Upper lobe of right lung (tissue), 1 donor: ENCODE measurements at regions of chr11 and their contacts with region 1.

Region 1: DNA sequence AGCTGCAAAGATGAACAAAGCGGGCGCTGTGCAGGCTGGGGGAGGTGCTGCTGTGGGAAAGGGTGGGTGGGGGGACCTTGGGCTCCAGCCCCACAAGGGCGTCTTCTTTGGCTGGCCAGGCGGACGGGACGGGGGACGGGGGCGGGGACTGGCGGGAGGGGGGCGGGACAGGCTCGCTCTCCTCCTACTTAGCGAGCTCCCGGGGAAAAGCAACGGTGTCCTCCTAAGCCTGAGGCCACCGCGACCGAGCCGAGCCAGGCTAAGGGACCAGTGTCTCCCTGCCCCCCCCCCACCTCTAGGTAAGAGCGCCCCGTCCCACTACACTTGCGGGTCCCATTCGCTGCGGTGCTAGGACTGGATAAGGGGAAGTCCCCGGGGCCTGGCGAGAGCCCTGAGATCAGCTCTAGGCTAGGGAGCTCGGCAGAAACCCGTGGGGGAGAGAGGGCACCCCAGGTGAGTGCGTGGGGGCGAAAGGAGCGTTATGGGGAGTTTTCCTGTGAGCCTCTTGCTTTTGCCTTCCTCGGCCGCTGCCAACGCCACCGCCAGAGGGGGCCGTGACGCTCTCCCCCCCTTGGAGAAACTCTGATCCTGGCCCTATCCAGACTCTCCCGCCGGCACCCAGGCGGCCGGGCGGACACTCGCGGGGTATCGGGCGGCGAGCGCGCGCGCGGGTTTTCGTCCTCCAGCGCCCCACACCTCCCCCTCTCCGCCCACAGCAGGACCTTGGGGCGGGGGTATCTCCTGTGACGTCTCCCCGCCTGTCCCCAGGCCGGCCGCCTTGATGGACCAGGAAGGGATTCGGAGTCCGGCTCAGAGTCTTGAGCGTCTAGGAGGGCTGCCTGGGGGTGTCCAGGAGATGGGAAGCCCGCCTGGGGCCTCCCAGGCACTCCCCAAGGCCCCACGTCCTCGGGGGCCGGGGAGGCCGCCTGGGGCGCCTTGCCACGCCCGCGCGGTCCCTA is at the start of gene PHLDB1:
- DNase-seq: peak; percentile 81
- ATAC-seq: peak; percentile 52
- H3K4me3 ChIP-seq: peak within 1 kb of the TSS; percentile 68
- H3K27ac ChIP-seq: peak within 1 kb of the TSS; percentile 85
- H3K4me1 ChIP-seq: peaks cover 29% of the 10 kb centered on the region
- H3K27me3 ChIP-seq: no peaks in the 10 kb centered on the region
- CTCF ChIP-seq: peak; percentile 56
- total RNA-seq, gene PHLDB1: 79.6 TPM

Region 2: GRCh38 chr11:118659314-118659952 is 51.8 kb after region 1 on chr11:
- intact Hi-C with region 1: loop called (anchors 10 kb)
- DNase-seq: peak; percentile 94
- ATAC-seq: peak; percentile 93
- H3K4me3 ChIP-seq: no peak overlapping the region
- H3K27ac ChIP-seq: peak overlapping the region; percentile 40
- H3K4me1 ChIP-seq: peaks cover 7% of the 10 kb centered on the region
- H3K27me3 ChIP-seq: no peaks in the 10 kb centered on the region
- CTCF ChIP-seq: peak; percentile 97